HEK293T (cell line): ENCODE measurements at regions of chr12 and their contacts with region 1.

Region 1: GRCh38 chr12:6944381-6945186 is 762 bp downstream of the C12orf57 start:
- DNase-seq: peak; percentile 74

Region 2: DNA sequence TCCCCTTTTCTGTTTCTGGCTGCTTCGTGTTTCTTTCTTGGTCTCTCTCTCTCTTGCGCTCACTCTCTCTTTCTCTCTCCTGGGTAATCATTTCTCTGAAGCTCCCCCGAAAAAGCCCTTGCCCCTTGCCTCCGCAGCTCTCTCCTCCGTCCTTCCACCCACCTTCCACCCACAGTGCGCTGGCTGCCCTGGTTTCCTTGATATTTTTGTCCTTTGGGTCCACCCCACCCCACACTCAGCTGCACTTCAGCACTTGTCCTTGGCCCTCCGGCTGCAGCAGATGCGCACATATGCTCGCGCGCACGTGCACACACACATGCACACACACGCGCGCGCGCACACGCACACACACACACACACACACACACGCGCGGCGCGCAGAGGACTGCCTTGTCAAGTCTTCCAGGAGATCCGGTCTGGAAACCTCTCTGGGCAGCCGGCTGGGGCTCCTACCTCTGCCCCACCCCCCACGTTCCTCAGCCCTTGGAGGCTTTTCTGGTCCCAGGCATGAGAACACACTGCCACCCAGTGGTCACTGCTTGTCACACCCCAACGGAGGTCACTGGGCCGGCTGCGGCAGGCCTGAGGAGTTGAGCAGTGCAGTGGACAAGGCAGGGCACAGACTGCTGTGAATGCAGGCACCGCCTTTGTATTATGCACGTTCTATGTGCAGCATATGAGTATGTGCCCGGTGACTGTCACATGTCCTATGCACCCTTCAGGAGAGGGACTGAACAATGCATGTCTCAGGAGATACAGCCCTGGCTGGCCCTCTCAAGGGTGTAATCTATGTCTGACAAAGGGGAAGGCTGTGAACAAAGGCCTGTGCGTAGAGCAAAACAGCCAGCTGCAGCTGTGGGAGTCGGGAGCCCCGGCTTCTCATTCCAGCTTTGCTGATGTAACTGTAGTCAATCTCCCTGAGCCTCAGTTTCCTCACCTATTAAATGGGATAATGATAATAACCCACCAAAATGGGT is 165.7 kb before region 1 on chr12:
- CTCF ChIA-PET with region 1: no interaction called
- POLR2A ChIA-PET with region 1: no interaction called
- DNase-seq: peak; percentile 87

Region 3: DNA sequence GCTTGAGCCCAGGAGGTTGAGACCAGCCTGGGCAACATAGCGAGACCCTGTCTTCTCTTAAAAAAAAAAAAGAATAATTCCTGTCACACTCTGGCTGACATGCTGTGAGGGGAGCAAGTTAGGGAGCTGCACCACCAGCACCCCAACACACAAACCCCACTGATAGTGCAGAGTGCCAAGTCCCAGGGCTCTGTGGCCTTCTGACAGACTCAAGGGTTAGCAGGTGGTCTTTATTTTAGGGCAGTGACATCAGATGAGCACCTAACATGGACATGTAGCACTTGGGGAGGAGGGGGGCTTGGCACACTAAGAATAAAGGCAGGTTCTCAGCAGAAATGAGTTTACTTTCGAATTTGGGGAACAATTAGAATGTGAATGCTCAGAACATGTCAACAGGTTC is 85.8 kb before region 1 on chr12:
- CTCF ChIA-PET with region 1: no interaction called
- POLR2A ChIA-PET with region 1: no interaction called
- DNase-seq: no peak

Region 4: GRCh38 chr12:6873094-6874014 is 71.2 kb before region 1 on chr12 and contains the start of gene SPSB2:
- CTCF ChIA-PET with region 1: interaction called, 7 read pairs
- POLR2A ChIA-PET with region 1: interaction called, 63 read pairs
- DNase-seq: peak; percentile 96

Region 5: DNA sequence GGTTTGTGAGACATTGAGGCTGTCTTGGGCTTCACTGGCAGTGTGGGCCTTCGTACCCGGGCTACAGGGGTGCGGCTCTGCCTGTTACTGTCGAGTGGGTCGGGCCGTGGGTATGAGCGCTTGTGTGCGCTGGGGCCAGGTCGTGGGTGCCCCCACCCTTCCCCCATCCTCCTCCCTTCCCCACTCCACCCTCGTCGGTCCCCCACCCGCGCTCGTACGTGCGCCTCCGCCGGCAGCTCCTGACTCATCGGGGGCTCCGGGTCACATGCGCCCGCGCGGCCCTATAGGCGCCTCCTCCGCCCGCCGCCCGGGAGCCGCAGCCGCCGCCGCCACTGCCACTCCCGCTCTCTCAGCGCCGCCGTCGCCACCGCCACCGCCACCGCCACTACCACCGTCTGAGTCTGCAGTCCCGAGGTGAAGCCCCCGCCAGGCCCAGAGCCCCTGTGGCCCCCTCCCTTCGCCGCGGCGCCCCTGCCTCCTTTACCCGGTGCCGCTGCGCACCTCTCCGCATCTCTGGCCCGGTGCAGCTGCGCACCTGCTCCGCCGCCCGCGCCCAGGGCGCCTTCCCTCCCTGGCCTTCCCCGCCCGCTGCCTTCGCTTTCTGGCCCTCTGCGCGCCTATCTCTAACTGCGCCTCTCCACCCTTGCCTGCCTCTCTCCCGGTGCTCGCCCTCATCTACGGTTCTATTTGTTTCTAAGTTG is 30.2 kb before region 1 on chr12 and contains the start of gene ENO2:
- CTCF ChIA-PET with region 1: no interaction called
- POLR2A ChIA-PET with region 1: interaction called, 26 read pairs
- DNase-seq: no peak

Region 6: DNA sequence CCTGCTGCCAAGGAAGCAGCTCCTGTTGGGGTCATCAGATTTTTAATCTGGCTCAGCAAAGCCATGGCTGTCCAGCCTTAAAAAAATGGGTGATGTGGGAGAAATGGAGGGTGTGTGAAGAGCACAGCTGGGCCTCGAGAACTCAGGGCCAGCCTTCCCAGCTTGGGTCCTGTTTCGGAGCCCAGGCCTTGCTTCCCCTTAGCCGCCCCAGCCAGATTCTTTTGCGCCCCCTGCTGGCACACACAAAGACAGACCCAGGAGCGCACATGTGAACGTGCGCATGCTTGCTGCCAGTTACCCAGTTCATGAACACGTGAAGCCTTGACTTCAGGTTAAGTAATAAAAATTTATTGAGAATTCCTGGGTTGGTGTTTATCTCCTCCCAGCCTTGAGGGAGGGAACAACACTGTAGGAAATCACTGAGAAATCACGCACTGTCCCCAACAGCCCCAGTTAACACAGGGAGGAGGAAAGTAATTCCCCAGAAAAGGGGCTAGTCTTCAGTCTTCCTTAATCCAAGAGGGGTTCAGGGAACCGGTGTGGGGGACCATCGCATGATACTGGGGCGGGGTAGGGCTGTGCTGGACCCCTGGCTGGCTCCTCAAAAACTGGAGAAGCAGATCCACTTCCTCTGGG is 20.6 kb after region 1 on chr12:
- CTCF ChIA-PET with region 1: interaction called, 47 read pairs
- POLR2A ChIA-PET with region 1: interaction called, 450 read pairs
- DNase-seq: peak; percentile 81

Region 7: DNA sequence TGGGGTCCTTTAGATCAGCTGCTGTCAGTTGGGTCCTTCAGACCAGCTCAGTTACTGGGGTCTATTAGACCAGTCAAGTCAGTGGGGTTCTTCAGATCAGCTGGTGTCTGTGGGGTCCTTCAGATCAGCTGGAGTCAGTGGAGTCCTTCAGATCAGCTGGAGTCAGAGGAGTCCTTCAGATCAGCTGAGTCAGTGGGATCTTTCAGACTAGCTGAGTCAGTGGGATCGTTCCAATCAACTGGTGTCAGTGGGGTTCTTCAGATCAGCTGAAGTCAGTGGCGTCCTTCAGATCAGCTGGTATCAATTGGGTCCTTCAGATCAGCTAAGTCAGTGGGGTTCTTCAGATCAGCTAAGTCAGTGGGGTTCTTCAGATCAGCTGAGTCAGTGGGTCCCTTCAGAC is 88.4 kb after region 1 on chr12:
- CTCF ChIA-PET with region 1: no interaction called
- POLR2A ChIA-PET with region 1: interaction called, 12 read pairs
- DNase-seq: no peak

Region 8: DNA sequence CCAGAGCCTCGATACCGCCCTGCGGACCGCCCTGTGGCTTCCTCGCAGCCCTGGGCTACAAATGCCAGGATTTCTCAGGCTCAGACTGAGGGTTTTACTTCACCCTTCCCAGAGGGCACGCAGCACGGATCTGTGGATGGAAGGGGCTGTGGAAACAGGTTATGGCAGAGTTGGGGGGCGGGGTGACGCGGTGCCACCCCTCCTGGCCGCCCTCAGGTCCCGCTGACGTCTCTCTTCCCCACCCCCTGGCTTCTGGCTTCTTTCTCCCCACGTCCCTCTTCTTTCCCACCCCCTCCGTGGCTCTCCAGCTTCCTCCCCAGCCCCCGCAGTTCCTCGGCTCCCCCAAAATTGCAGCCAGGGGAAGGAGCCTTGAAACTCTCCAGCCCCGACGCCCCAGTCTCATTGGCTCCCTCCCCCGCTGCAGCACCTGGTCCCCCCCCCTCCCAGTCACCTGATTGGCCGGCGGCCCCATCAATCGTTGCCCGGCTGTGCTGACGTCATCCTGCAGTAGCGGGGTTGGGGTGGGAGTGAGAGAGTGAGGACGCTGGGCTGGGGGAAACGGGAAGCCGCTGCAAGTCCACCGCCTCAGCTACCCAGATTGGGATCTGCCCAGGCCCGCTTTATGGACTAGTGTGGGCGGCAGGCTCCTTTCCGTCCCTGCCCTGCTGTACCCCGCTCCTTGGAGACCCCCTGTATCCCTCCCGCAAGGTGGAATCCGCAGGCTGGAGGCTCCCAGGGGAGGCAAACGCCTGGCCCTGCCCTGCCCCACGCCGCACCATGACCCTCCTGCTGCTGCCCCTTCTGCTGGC is 185.5 kb after region 1 on chr12 and contains the start of gene CLSTN3:
- CTCF ChIA-PET with region 1: interaction called, 3 read pairs
- POLR2A ChIA-PET with region 1: interaction called, 10 read pairs
- DNase-seq: peak; percentile 98